ENCODE measurements at regions of chr15 and their contacts with region 1.

Region 1: DNA sequence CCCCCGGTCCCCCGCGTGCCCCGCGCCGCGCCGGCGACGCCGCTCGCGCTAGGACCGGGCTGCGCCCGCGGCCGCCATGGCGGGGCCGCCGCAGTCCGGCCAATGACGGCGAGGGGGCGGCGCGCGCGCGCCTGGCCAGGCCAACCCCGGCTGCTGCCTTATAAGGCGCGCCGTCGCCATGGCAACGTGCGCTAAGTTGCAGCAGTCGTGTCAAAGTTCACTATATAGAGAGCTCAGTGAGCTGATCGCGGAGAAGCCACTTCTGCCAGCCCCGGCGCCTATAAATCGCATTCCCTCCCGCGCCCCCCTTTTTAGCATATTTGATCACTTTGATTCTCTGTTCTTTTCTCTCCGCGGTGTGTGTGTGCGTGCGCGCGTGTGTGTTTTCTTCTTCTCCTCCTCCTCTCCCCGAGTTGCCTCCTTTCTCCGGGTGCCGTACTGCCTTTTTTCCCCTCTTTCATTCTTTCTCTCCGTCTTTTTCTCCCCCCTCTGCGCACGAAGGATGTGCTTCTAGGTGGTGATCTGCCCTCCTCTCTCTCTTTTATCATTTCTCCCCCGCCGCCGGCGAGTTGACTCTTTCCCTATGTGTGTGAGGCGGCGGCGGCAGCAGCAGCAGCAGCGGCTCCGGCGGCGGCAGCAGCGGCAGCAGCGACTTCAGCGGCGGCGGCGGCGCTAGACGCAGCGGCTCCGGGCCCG is at the start of gene NR2F2:
- DNase-seq: peak; percentile 47
- H3K4me3 Mint-ChIP-seq: peak within 1 kb of the TSS; percentile 86
- H3K27ac Mint-ChIP-seq: peak within 1 kb of the TSS; percentile 84
- H3K4me1 Mint-ChIP-seq: peaks cover 13% of the 10 kb centered on the region
- H3K27me3 Mint-ChIP-seq: peaks cover 80% of the 10 kb centered on the region
- total RNA-seq, gene NR2F2: not detected in 2 replicates

Region 2: GRCh38 chr15:95259513-95259912 is 1071.1 kb before region 1 on chr15:
- intact Hi-C with region 1: loop called (anchors 5 kb)
- DNase-seq: peak; percentile 49
- H3K4me3 Mint-ChIP-seq: no peak overlapping the region
- H3K27ac Mint-ChIP-seq: no peak overlapping the region
- H3K4me1 Mint-ChIP-seq: peaks cover 12% of the 10 kb centered on the region
- H3K27me3 Mint-ChIP-seq: peaks cover 54% of the 10 kb centered on the region

Region 3: GRCh38 chr15:96356494-96357455 is 26.2 kb after region 1 on chr15:
- intact Hi-C with region 1: loop called (anchors 2 kb)
- DNase-seq: peak; percentile 68
- H3K4me3 Mint-ChIP-seq: peak overlapping the region; percentile 83
- H3K27ac Mint-ChIP-seq: peak overlapping the region; percentile 63
- H3K4me1 Mint-ChIP-seq: peaks cover 16% of the 10 kb centered on the region
- H3K27me3 Mint-ChIP-seq: peaks cover 56% of the 10 kb centered on the region

Region 4: DNA sequence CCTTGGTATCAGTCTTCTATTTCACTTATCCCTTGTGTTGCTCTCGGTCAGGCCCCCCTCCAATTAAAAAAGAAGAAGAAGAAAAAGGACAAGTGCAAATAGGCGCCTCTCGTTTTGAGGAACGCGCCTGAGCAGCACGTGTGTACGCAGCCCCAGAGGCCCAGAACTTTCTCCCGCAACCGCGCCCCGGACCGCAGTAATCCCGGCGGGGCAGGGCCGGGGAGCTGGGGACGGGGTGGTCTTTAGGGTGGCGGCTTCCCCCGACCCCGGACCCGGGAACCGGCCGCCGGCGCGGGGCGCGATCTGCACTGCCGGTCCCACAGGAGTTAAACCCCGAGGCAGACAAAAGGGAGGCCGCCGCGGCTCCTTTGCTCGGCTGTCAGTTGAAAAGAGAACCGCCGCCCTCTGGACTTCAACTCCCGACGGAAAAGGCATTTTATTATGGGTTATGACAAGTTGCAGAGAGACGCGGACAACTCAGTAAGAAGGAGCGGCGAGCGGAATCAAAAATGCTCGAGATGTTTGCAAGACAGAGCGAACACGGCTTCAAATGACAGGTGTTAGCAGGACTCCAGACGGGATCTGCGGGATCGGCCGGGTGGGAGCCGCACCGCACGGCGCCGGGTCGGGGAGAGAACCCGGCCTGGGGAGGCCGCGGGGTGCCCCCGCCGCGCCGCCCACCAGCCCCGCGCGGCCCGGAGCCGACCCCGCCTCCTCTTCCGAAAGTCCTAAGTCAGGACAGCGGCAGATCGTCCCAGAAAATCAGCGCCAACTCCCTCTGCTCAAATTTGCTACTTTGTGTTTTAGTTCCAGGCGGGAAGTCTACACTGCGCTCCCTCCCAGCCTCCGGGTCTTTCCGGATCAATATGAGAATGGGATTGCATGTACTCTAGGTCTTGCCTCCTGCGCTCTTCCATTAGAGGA is 78.9 kb after region 1 on chr15:
- intact Hi-C with region 1: loop called (anchors 5 kb)
- DNase-seq: no peak
- H3K4me3 Mint-ChIP-seq: no peak overlapping the region
- H3K27ac Mint-ChIP-seq: peak overlapping the region; percentile 43
- H3K4me1 Mint-ChIP-seq: peaks cover 6% of the 10 kb centered on the region
- H3K27me3 Mint-ChIP-seq: peaks cover 65% of the 10 kb centered on the region

Region 5: DNA sequence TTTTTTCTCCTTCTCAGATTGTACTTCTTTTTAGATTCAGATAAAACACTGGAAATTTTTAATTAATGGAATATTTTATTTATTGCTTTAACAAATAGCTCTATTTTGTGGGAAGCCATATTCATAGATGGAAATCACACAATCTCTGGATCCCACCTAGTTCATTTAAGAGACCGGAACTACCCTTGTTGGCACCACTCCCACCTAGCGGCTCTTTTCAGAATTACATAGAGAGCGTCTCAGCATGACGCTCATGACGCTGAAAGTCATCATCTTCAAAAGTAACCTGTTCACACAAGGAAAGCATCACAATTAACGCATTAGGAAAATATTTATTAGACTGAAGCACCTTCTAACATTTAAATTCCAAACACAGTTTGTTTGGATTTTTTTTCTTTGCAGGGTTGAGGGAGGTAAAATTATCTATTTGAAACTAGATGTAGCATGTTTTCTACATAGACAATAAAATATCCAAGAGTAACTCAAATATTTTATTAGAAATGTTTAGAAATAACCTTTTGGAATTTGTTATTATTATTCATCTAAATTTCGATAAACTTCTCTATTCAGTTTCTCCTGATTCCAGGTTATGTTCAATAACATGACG is 1415.0 kb after region 1 on chr15:
- intact Hi-C with region 1: loop called (anchors 2 kb)
- DNase-seq: peak; percentile 1
- H3K4me3 Mint-ChIP-seq: no peak overlapping the region
- H3K27ac Mint-ChIP-seq: no peak overlapping the region
- H3K4me1 Mint-ChIP-seq: no peaks in the 10 kb centered on the region
- H3K27me3 Mint-ChIP-seq: no peaks in the 10 kb centered on the region

Measured in activated T-helper 1 cell treated with anti-CD3 and anti-CD28 coated beads, Interleukin-12 subunit alpha, Interleukin-12 subunit beta, Interleukin-2, Interleukin-4 antibody, amounts not matched to agents 30 ng/mL and 10 ng/mL and 1 ng/mL, durations not matched to agents 14 hours and 24 hours and 36 hours (primary cell).